Activated CD8-positive, alpha-beta memory T cell treated with anti-CD3 and anti-CD28 coated beads, Interleukin-2, amount 10 ng/mL, durations not matched to agents 7 days and 5 days (primary cell): ENCODE measurements at regions of chr12 and their contacts with region 1.

Region 1: GRCh38 chr12:442235-442884 is 17.4 kb upstream of the B4GALNT3 start:
- DNase-seq: peak; percentile 56
- ATAC-seq: no peak
- H3K4me3 Mint-ChIP-seq: no peak overlapping the region
- H3K27ac Mint-ChIP-seq: no peak overlapping the region
- H3K4me1 Mint-ChIP-seq: no peaks in the 10 kb centered on the region
- H3K27me3 Mint-ChIP-seq: no peaks in the 10 kb centered on the region

Region 2: DNA sequence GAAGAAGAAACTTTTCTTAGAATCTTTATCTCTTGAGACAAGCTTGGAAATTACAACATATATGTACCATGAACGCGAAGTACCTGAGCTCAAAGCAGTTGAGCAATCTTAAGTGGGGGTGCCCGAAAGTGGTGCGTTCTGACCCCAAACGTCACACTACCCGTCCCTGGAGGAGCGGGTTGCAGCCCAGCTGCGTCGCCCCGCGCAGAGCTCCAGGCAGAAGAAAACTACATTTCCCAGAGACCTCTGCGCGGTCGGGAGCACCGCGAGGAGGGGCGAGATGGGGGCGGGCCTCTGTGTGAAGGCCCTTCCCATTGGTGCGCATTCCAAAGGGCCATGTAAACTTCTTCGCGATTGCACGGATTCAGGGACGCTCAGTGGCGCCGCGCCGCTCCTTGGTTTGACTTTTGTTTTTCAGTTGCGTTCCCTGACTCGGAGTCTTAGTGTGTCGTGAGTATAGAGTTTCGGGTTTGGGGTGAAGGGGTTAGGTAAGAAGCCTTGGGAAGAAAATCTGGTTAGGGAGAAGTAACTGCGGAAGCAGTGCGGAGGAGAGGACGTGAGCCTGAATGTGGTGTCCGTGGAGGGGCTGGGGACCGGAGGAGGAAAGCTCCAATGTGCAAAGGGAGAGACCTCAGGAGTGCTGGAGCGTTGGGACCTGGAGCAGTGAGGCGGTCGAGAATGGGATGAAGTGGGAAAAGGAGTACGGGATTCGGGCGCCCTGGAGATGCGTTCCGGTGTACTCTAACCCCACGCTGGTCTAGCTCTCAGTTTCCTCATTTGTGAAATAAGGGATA is 40.9 kb before region 1 on chr12 and contains the start of gene CCDC77:
- CTCF ChIA-PET with region 1: interaction called, 12 read pairs
- DNase-seq: peak; percentile 95
- ATAC-seq: peak; percentile 100
- H3K4me3 Mint-ChIP-seq: no peak within 1 kb of the TSS
- H3K27ac Mint-ChIP-seq: no peak within 1 kb of the TSS
- H3K4me1 Mint-ChIP-seq: peaks cover 6% of the 10 kb centered on the region
- H3K27me3 Mint-ChIP-seq: no peaks in the 10 kb centered on the region
- total RNA-seq, gene CCDC77: 19.5 to 20.2 TPM

Region 3: GRCh38 chr12:546921-547845 is 104.8 kb after region 1 on chr12:
- CTCF ChIA-PET with region 1: interaction called, 32 read pairs
- DNase-seq: peak; percentile 79
- ATAC-seq: peak; percentile 84
- H3K4me3 Mint-ChIP-seq: no peak overlapping the region
- H3K27ac Mint-ChIP-seq: no peak overlapping the region
- H3K4me1 Mint-ChIP-seq: peaks cover 14% of the 10 kb centered on the region
- H3K27me3 Mint-ChIP-seq: peaks cover 14% of the 10 kb centered on the region

Region 4: GRCh38 chr12:552466-552865 is 110.1 kb after region 1 on chr12:
- CTCF ChIA-PET with region 1: interaction called, 32 read pairs
- DNase-seq: no peak
- ATAC-seq: no peak
- H3K4me3 Mint-ChIP-seq: no peak overlapping the region
- H3K27ac Mint-ChIP-seq: no peak overlapping the region
- H3K4me1 Mint-ChIP-seq: peaks cover 35% of the 10 kb centered on the region
- H3K27me3 Mint-ChIP-seq: peaks cover 10% of the 10 kb centered on the region